CD14-positive monocyte (primary cell): ENCODE measurements at regions of chr2 and their contacts with region 1.

Region 1: GRCh38 chr2:232854082-232854481 is 16.0 kb upstream of the SNORC start:
- DNase-seq: no peak
- H3K4me3 ChIP-seq: no peak overlapping the region
- H3K4me3 Mint-ChIP-seq: no peak overlapping the region
- H3K27ac ChIP-seq: no peak overlapping the region
- H3K27ac Mint-ChIP-seq: no peak overlapping the region
- H3K4me1 ChIP-seq: no peaks in the 10 kb centered on the region
- H3K4me1 Mint-ChIP-seq: no peaks in the 10 kb centered on the region
- H3K27me3 ChIP-seq: no peaks in the 10 kb centered on the region
- H3K27me3 Mint-ChIP-seq: peaks cover 0 to 1% (median 0%) of the 10 kb centered on the region in 3 donors
- CTCF ChIP-seq: no peak

Region 2: GRCh38 chr2:232795920-232796319 is 58.2 kb before region 1 on chr2:
- intact Hi-C with region 1: no loop called
- DNase-seq: no peak
- H3K4me3 ChIP-seq: no peak overlapping the region
- H3K4me3 Mint-ChIP-seq: no peak overlapping the region
- H3K27ac ChIP-seq: no peak overlapping the region
- H3K27ac Mint-ChIP-seq: no peak overlapping the region
- H3K4me1 ChIP-seq: no peaks in the 10 kb centered on the region
- H3K4me1 Mint-ChIP-seq: no peaks in the 10 kb centered on the region
- H3K27me3 ChIP-seq: no peaks in the 10 kb centered on the region
- H3K27me3 Mint-ChIP-seq: no peaks in the 10 kb centered on the region
- CTCF ChIP-seq: no peak

Region 3: DNA sequence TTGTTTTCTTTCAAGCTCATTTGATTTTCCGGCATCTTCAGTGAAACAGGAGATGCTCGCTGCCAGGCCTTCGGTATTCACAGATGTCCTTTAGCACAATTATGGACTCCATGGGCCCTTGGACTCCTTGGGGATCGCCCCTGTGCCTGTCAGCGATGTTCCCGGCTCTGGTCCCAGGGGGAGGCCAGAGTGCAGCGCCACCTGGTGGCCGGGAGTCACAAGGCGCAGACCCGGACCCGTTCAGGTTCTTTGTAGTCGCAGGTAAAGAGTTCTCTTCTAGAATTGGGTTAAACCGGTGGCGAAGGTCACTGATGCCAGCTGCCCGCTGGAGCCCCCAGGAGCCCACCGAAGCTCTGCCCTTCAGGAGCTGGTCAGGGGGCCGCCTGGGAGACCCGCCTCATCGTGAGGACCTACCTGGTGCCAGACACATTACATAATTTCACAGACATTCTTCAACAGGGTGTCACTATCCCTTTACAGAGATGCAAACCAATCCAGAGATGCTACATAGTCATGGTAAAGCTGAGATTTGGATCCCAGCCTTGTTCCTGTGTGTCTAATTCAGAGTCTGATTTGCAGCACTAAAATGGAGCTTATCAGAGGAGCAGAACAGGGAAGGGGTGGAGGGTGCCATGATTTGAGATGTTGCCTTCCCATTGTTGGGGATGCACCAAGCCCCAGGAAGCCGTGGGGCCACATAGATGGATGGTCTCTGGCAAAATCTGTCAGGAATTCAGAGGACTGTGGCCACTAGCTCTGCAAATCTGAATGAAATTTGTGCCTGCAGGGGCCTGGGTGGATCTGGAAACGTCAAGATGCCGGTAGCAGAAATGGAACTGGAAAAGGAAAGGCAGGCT is 200.1 kb after region 1 on chr2:
- intact Hi-C with region 1: loop called in 1 of 2 experiments (anchors 10 kb)
- DNase-seq: peak; percentile 35 to 63 (median 62)
- H3K4me3 ChIP-seq: no peak overlapping the region
- H3K4me3 Mint-ChIP-seq: peak overlapping the region in 1 of 2 donors; percentile 4
- H3K27ac ChIP-seq: no peak overlapping the region
- H3K27ac Mint-ChIP-seq: peak overlapping the region in 1 of 7 donors; percentile 28
- H3K4me1 ChIP-seq: peaks cover 9 to 18% of the 10 kb centered on the region in 2 donors
- H3K4me1 Mint-ChIP-seq: peaks cover 24% of the 10 kb centered on the region
- H3K27me3 ChIP-seq: no peaks in the 10 kb centered on the region
- H3K27me3 Mint-ChIP-seq: peaks cover 5 to 10% (median 9%) of the 10 kb centered on the region in 3 donors
- CTCF ChIP-seq: peak; percentile 99